ENCODE measurements at regions of chr3 and their contacts with region 1.

Region 1: GRCh38 chr3:159884661-159885402 is 103.8 kb upstream of the IL12A start:
- DNase-seq: peak; percentile 63
- H3K4me3 ChIP-seq: no peak overlapping the region
- H3K27ac ChIP-seq: no peak overlapping the region
- H3K4me1 ChIP-seq: peaks cover 17% of the 10 kb centered on the region
- H3K27me3 ChIP-seq: no peaks in the 10 kb centered on the region

Region 2: GRCh38 chr3:160003520-160004128 is 118.8 kb after region 1 on chr3:
- in situ Hi-C with region 1: loop called (anchors 5 kb)
- DNase-seq: peak; percentile 64
- H3K4me3 ChIP-seq: no peak overlapping the region
- H3K27ac ChIP-seq: no peak overlapping the region
- H3K4me1 ChIP-seq: no peaks in the 10 kb centered on the region
- H3K27me3 ChIP-seq: no peaks in the 10 kb centered on the region

Measured in GM23248 (cell line).